ENCODE measurements at regions of chr7 and their contacts with region 1.

Region 1: DNA sequence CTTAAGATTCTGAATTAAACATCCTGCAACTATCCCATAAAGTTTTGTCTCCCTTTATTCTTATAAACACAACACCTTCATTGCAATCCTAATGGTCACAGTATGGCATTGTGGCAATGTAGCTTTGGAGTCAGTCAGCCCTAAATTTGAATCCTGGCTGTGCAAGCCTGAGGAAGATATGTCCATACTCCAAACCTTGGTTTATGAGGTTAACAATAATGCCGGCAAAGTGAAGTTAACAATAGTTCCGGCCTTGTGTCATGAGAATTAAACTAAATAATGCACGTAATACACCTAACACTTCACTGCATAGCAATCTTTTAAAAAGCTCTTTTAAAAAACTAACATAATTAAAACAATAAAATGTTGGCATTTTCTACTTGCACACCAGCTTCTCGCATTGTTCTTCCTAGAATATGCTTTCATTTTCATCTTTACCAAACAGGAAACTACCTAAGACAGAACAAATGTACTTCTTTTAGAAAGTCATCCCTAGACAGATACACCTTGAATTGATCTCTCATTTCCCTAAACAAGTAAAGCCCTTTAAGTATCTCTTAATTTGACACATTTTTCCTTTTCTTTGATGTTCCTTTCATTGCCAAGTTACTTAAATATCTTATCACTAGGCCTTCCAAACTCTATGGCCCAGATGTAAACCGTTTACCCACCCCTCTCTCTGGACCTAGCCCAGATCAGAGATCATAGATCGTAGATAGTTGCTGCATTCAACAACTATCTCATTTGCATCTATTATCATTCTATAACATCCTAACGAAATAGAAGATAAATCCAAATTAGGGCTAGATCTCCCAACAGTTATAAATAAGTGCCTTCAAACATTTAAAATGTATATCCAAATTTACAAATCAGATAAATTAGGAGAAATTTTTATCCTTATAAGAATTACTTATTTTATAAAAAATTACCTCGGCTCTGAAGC is 66.7 kb downstream of the CREB3L2 start:
- DNase-seq: peak in 2 of 3 donors; percentile 50 to 64
- H3K4me3 ChIP-seq: peak overlapping the region in 6 of 7 experiments; percentile 48 to 74 (median 62)
- H3K27ac ChIP-seq: peak overlapping the region; percentile 72 to 89
- H3K4me1 ChIP-seq: peaks cover 21 to 54% (median 43%) of the 10 kb centered on the region in 4 experiments
- H3K27me3 ChIP-seq: no peaks in the 10 kb centered on the region

Region 2: GRCh38 chr7:137985253-137985896 is 50.2 kb after region 1 on chr7:
- CTCF ChIA-PET with region 1: no interaction called
- POLR2A ChIA-PET with region 1: no interaction called
- DNase-seq: no peak
- H3K4me3 ChIP-seq: no peak overlapping the region
- H3K27ac ChIP-seq: no peak overlapping the region
- H3K4me1 ChIP-seq: peaks cover 0 to 27% (median 12%) of the 10 kb centered on the region in 4 experiments
- H3K27me3 ChIP-seq: no peaks in the 10 kb centered on the region

Region 3: DNA sequence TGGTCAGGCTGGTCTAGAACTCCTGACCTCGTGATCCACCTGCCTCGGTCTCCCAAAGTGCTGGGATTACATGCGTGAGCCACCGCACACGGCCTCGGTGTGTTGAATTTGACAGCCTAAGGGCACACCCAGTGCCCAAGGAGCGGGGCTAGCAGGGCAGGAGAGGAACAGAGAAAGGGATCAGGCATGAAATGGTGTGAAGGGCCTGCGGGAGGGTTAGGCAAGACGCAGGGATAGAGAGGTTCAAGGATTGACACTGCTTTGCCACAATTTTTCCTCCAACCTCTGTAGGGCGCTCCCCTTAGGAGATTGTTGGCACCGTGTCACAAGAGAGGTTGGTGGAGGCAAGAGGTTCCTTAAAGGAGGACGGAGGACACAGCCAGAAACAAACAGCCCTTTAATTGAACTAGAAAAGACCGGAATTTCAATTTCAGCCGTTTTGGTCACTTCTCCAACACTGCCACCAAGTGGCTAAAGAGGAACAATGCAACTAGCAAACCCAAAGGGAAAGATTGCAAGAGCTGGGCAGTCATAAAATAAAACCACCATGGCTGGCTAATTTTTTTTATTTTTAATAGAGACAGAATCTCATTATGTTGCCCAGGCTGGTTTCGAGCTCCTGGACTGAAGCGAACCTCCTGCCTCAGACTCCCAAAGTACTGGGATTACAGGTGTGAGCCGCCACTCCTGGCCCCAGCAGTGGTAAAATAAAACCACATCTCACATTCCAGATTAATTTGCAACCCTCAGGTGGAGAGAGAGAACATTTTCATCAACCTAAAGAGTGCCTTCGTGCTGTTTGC is 73.5 kb after region 1 on chr7:
- CTCF ChIA-PET with region 1: interaction called, 11 read pairs
- POLR2A ChIA-PET with region 1: no interaction called
- DNase-seq: peak; percentile 61 to 81 (median 77)
- H3K4me3 ChIP-seq: peak overlapping the region in 1 of 7 experiments; percentile 49
- H3K27ac ChIP-seq: no peak overlapping the region
- H3K4me1 ChIP-seq: peaks cover 0 to 15% (median 8%) of the 10 kb centered on the region in 4 experiments
- H3K27me3 ChIP-seq: no peaks in the 10 kb centered on the region